Activated T-helper 2 cell treated with anti-CD3 and anti-CD28 coated beads, Interferon-gamma antibody, Interleukin-2, Interleukin-4, amounts not matched to agents 10 μg/mL and 5 μg/mL and 100 μg/mL, durations not matched to agents 14 hours and 24 hours and 36 hours (primary cell): ENCODE measurements at regions of chr3 and their contacts with region 1.

Region 1: GRCh38 chr3:27927882-27928281 is 205.8 kb upstream of the EOMES start:
- DNase-seq: no peak
- H3K4me3 Mint-ChIP-seq: no peak overlapping the region
- H3K27ac Mint-ChIP-seq: peak overlapping the region; percentile 62
- H3K4me1 Mint-ChIP-seq: peaks cover 56% of the 10 kb centered on the region
- H3K27me3 Mint-ChIP-seq: no peaks in the 10 kb centered on the region

Region 2: GRCh38 chr3:27596334-27596841 is 331.5 kb before region 1 on chr3:
- intact Hi-C with region 1: loop called (anchors 10 kb)
- DNase-seq: no peak
- H3K4me3 Mint-ChIP-seq: no peak overlapping the region
- H3K27ac Mint-ChIP-seq: peak overlapping the region; percentile 33
- H3K4me1 Mint-ChIP-seq: peaks cover 26% of the 10 kb centered on the region
- H3K27me3 Mint-ChIP-seq: no peaks in the 10 kb centered on the region

Region 3: DNA sequence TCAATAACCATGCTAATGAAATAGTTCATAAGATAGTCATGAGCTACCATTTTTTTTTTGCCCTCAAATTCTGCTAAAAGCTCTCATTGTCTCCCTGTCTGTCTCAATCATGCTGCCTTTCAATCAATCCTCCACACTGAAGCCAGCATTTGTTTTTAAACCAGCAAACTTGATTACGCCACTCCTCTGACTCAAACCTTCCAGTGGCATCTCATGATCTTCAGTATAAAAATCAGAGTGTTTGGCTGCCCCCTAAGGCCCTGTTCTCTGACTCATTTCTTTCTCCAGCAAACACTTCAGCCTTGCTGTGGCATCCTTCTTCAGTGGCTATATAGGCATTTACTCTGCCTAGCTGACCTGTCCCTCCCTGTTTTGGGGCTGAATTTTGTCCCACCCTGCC is 169.8 kb before region 1 on chr3:
- intact Hi-C with region 1: loop called (anchors 5 kb)
- DNase-seq: no peak
- H3K4me3 Mint-ChIP-seq: no peak overlapping the region
- H3K27ac Mint-ChIP-seq: no peak overlapping the region
- H3K4me1 Mint-ChIP-seq: peaks cover 18% of the 10 kb centered on the region
- H3K27me3 Mint-ChIP-seq: peaks cover 4% of the 10 kb centered on the region

Region 4: GRCh38 chr3:27960133-27960532 is 32.3 kb after region 1 on chr3:
- intact Hi-C with region 1: loop called (anchors 1 kb)
- DNase-seq: no peak
- H3K4me3 Mint-ChIP-seq: no peak overlapping the region
- H3K27ac Mint-ChIP-seq: no peak overlapping the region
- H3K4me1 Mint-ChIP-seq: peaks cover 41% of the 10 kb centered on the region
- H3K27me3 Mint-ChIP-seq: no peaks in the 10 kb centered on the region

Region 5: DNA sequence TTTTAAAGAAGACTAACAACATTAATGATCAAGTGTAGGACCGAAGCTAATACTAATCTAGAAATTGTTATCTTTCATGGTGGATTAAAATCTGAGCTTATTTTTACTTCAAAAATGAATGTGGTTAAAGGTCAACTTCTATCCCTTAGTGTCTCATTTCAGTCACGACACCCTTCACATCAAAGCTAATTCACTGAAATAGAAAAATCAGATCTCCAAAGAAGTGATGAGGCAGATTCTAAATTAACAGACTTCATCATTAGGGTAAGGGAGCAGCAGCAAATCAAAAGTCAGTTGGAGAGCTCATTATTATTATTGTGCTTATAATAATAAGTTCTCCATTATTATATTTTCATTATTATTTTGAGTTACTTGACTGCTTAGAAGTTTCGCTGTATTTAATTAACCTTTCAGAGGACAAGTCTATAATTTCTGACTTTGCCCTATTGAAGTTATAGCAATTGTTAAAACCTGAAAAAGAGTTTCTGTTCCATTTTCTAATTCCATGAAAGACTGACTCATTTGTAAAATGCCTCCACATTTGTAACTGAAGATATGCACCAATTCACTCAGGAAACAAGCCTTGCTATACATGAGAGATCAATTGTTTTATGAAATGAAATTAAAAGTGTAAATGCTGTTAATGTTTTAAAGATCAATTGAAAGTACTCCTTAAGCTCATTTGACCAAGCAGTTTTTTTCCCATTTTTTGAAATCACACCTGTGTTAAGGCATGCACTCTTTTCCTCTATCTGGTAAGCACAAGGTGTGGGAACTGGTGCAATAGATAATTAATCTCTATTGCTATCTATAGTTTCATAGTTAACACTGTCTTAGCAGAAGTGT is 290.4 kb after region 1 on chr3:
- intact Hi-C with region 1: loop called (anchors 10 kb)
- DNase-seq: no peak
- H3K4me3 Mint-ChIP-seq: no peak overlapping the region
- H3K27ac Mint-ChIP-seq: peak overlapping the region; percentile 64
- H3K4me1 Mint-ChIP-seq: peaks cover 17% of the 10 kb centered on the region
- H3K27me3 Mint-ChIP-seq: no peaks in the 10 kb centered on the region

Region 6: DNA sequence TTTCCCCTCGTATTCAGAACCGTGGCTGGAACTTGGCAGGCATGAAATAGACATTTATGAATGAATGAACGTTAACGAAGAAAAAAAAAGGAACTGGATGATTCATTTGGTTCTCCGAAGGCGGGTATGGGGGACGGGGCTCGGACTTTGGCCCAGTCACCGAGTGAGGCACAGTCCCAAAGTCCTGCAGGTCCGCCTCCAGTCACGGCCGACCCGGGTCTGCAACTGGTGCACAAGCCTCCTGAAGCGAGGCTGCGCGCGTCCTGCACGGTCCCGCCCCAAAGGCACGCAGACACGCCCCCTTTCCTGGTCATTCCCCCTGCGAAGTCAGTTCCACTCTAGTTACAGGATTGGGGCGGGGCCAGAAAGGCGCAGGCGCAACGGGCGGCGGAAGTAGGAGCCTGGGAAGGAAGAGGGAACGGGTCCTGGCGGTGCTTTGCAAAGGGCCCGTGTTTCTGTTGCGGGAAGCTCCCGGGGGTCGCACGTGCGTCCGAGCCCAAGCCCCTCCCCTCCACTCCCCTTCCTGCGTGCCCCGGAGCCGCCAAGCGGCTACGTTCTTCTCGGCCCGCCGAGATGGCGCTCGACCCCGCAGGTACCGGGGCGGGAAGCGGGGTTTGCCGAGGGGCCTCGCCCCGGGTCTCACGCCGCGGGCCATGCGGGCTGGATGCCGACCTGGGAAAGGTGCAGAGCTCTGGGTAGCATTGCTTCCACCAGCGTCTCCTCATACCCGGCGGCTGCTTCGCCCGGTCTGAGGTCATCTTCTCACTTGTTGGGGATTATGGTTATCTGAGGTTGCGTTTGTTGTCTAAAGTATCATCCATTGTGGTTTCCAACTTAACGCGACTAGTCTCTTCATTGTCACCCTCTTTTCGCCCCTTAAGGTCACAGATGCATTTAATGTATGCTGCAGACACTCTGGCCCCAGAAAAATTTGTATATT is 313.6 kb after region 1 on chr3 and contains the start of gene CMC1:
- intact Hi-C with region 1: loop called (anchors 5 kb)
- DNase-seq: peak; percentile 86
- H3K4me3 Mint-ChIP-seq: peak within 1 kb of the TSS; percentile 89
- H3K27ac Mint-ChIP-seq: peak within 1 kb of the TSS; percentile 93
- H3K4me1 Mint-ChIP-seq: peaks cover 38% of the 10 kb centered on the region
- H3K27me3 Mint-ChIP-seq: no peaks in the 10 kb centered on the region
- total RNA-seq, gene CMC1: 20.6 and 23.5 TPM in 2 replicates